Sciatic nerve (tissue), 2 donors: ENCODE measurements at regions of chr2 and their contacts with region 1.

Region 1: GRCh38 chr2:231227309-231228162 is 29.1 kb downstream of the ARMC9 start:
- DNase-seq: no peak
- ATAC-seq: peak; percentile 95

Region 2: DNA sequence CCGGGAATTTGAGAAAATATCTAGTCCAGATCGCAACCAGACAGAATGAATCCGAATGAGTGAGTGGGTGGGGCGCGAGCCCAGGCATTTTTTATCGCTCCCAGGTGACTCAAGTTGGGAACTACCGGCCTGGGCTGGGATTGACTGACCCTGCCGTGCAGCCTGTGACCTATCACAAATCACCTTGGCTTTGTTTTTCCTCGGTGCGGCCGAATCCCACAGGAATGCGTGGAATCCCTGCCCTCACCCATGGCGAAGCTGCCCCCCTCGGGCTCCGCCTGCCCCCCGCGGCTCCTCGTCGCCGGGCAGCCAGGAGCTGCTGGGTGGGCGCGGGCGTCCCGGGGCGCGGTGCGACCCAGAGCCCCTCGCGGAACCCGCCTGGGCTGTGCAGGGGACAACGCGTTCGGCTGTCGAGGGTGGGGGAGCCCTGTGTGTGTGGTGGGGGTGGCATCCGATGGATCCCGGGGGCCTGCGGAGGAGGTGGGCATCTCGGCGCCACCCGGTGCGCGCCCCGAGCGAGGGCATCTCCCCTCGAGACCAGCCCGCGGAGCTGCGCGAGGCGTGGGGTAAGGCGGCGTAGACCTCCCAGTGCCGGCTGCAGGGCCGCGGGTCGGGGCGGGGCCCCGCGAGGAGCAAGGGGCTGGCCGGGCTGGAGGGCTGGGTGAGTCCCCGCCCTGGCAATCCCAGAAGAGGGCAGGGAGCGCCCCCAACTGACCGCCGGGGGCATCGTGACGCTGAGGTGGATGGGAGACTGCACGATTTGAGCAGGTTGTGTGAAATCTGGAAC is 184.5 kb after region 1 on chr2:
- intact Hi-C with region 1: loop called (anchors 5 kb)
- DNase-seq: peak; percentile 92
- ATAC-seq: peak; percentile 98